Head of caudate nucleus (tissue), 42 donors: ENCODE measurements at regions of chr3 and their contacts with region 1.

Region 1: GRCh38 chr3:15332405-15333098 is at the start of gene SH3BP5:
- DNase-seq: peak in 41 of 42 donors; percentile 35 to 90 (median 80)

Region 2: GRCh38 chr3:15377961-15378791 is 45.6 kb after region 1 on chr3:
- intact Hi-C with region 1: loop called (anchors 5 kb)
- DNase-seq: peak; percentile 89 to 99 (median 97)

Region 3: GRCh38 chr3:15467227-15468181 is 135.0 kb after region 1 on chr3:
- intact Hi-C with region 1: no loop called
- DNase-seq: peak in 1 of 42 donors; percentile 37

Region 4: DNA sequence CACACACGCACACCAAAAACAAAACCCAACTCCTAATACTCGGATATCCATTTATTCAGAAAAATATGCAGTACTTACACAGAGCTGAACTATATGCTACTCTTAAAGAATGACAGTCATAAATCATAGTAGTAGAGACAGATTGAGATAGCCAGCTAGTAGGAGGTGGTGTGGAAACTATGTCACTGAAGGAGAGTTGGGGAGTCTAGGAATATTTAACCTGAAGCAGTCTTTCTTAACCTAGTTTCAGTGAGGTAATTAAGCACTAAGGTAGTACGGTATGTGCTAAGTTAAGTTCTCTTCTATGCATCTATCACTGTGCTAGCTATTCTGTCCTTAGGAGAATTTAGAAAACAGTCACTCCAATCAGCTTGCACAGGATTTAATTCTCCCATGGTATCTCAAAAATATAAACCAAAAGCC is 411.0 kb after region 1 on chr3:
- intact Hi-C with region 1: no loop called
- DNase-seq: no peak